Activated naive CD4-positive, alpha-beta T cell treated with anti-CD3 and anti-CD28 coated beads for 36 hours (primary cell): ENCODE measurements at regions of chr1 and their contacts with region 1.

Region 1: DNA sequence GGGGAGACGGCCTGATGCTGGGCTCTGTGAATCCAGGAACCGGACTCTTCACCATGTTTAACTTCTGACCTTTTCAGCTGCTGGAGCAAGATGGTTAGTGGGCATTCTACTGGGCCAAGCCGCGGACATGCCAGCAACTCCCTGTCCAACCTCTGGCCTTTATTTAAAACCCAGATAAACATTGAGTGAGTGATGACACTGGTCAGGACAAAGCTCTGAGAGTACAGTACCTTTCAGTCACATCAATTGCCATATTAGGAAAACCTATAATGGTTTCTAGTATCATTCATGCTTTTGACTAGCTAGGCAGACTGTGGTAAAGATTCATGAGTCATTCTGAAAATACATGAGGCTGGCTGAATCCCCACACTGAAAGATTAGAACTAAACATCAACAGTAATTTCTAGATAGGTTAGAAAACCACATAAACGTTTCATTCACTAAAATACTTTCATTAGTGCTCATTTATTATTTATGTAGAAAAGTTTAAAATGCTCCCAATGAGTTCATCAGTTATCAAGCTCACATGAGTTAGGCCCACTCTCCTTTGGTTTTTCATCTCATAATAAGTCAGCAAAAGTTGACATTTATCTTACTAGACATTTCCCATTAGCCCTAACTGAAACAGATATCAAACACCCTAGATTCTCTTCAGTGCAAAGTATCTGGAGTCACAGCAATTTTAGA is 7.1 kb upstream of the ACTA1 start:
- DNase-seq: peak; percentile 44
- H3K4me3 Mint-ChIP-seq: no peak overlapping the region
- H3K27ac Mint-ChIP-seq: peak overlapping the region; percentile 68
- H3K4me1 Mint-ChIP-seq: peaks cover 28% of the 10 kb centered on the region
- H3K27me3 Mint-ChIP-seq: peaks cover 13% of the 10 kb centered on the region

Region 2: DNA sequence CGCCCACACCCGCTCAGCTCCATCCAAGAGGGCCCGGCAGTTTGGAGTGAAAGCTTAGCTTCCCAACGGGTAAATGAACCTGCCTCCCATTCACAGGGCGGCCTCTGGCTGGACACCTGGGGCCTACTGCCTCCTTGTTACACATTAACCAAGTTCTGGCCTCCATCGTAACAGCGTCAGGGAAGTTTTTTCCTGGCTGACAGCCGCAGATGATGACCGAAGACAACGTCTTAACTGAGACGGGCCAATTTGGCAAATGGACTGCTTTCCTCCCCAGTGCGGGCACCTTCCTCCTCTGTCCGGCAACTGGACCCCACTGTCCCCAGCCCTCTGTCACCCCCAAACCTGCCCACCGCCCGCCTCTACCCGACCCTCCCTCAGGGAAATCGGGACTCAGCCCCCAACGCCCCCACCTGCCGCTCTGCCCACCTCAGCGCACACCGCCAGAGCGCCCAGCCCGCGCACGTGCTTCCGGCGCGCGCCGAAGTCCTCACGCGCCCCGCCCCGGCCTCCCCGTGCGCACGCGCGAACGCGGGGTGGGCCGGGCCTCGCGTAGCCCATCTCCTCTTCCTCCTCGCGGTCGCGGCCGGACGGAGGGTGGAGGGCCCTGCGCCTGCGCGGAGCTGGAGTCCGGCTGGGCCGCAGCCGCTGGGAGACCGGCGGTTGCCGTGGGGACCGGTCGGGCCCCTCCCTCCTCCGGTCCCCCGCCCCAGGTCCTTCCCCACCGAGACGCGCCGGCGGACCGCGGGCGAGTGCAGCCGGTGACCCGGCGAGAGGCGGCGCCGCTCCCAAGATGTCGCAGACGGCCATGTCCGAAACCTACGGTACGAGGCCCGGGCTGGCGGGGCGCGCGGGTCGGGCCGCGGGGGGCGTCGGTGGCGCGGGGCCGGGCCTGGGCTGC is 170.2 kb before region 1 on chr1 and contains the start of gene RAB4A:
- CTCF ChIA-PET with region 1: no interaction called
- intact Hi-C with region 1: loop called (anchors 2 kb)
- DNase-seq: peak; percentile 57
- H3K4me3 Mint-ChIP-seq: peak within 1 kb of the TSS; percentile 86
- H3K27ac Mint-ChIP-seq: peak within 1 kb of the TSS; percentile 75
- H3K4me1 Mint-ChIP-seq: peaks cover 33% of the 10 kb centered on the region
- H3K27me3 Mint-ChIP-seq: no peaks in the 10 kb centered on the region
- total RNA-seq, gene RAB4A: 15.8 to 19.9 TPM

Region 3: GRCh38 chr1:229341774-229342655 is 99.0 kb before region 1 on chr1:
- CTCF ChIA-PET with region 1: no interaction called
- intact Hi-C with region 1: loop called (anchors 1 kb)
- DNase-seq: peak; percentile 82
- H3K4me3 Mint-ChIP-seq: peak overlapping the region; percentile 88
- H3K27ac Mint-ChIP-seq: peak overlapping the region; percentile 74
- H3K4me1 Mint-ChIP-seq: peaks cover 40% of the 10 kb centered on the region
- H3K27me3 Mint-ChIP-seq: peaks cover 9% of the 10 kb centered on the region

Region 4: DNA sequence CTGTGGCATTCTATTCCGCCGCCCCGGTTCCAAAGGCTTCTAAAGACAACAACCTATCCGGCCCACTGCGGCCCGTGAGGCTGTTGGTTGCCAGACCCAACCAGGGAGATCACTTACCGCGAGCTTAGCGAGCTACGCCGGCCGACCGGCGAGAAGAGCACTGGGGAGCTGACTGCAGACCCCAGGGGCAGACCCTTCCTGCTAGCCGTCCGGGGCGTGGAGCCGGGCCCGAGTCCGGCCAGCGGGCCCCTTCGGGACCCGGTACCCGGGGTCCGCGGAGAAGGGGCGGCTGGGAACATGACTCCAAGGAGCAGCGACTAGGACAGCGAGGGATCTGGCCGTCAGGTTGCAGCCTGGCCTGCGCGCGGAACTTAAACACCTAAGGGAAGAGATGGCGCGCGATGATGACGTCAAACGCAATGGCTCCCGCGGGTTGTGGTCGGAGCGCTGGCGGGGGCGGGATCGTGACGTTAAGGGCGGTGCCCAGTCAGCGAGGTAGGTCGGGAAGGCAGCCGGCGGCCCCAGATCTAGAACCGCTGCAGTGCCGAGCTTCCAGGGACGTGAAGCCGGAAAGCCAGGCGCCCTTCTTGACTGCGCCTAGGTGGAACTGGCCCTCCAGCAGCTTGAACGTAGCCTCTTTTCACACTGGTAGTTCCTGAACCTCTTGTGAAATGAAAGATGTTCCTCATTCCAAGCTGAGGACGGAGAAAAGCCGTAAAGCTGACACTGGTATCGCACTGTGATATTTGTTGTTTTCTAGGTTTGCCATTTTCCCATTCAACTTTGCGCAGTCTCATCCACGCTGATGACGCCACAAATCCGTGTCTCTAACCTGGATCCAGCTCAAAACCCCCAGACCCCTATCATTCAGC is 67.2 kb after region 1 on chr1 and contains the start of gene NUP133:
- CTCF ChIA-PET with region 1: no interaction called
- intact Hi-C with region 1: loop called (anchors 1 kb)
- DNase-seq: peak; percentile 99
- H3K4me3 Mint-ChIP-seq: peak within 1 kb of the TSS; percentile 91
- H3K27ac Mint-ChIP-seq: peak within 1 kb of the TSS; percentile 91
- H3K4me1 Mint-ChIP-seq: peaks cover 25% of the 10 kb centered on the region
- H3K27me3 Mint-ChIP-seq: no peaks in the 10 kb centered on the region
- total RNA-seq, gene NUP133: 53.9 to 57.2 TPM

Region 5: GRCh38 chr1:229619614-229620013 is 178.6 kb after region 1 on chr1:
- CTCF ChIA-PET with region 1: no interaction called
- intact Hi-C with region 1: loop called (anchors 2 kb)
- DNase-seq: no peak
- H3K4me3 Mint-ChIP-seq: no peak overlapping the region
- H3K27ac Mint-ChIP-seq: no peak overlapping the region
- H3K4me1 Mint-ChIP-seq: peaks cover 54% of the 10 kb centered on the region
- H3K27me3 Mint-ChIP-seq: no peaks in the 10 kb centered on the region